ENCODE measurements at regions of chr19 and their contacts with region 1.

Region 1: DNA sequence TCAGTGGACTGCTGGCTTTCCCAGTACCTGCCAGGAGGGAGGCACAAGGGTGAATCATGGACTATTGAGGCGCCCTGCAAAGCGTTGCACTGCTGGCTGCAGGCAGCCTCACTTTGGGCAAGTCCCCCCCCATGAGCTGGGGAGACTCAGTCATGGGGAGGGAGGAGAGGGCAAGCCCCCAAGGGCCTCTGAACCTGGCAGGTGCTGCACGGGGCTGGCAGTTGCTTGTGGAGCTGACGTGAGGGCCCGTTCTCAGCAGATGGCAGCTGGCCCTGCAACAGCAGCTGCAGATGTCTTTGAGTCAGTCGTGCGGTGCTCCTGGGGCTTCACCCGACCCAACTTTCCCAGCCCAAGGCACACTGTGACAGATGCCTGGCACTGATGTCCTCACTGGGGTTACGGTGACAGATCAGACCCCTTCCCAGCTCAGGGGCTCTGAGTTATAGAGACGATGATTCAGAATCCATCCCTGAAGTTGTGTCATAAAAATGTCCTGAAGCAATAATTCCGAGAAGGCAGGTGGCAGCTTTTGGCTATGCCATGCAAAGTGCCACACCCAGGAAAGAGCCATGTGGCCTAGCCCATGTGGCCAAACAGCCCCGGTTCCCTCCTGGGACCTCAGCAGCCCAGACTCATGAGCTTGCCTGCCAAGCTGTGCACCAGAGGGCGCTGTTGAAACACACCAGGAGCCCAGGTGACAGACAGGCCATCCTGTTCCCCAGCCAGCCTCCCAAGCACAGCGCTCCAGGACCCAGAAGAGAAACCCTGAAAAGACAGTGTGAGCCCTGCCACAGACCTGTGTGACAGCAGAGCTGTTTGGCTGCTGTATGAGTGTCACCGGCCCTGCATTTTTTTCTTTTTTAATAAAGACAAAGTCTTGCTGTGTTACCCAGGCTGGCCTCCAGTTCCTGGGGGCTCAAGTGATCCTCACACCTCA is 53.6 kb upstream of the LDLR start:
- DNase-seq: peak; percentile 82
- ATAC-seq: peak; percentile 85
- H3K4me3 Mint-ChIP-seq: peak overlapping the region; percentile 33
- H3K27ac Mint-ChIP-seq: peak overlapping the region; percentile 81
- H3K4me1 Mint-ChIP-seq: peaks cover 22% of the 10 kb centered on the region
- H3K27me3 Mint-ChIP-seq: no peaks in the 10 kb centered on the region
- CTCF ChIP-seq: no peak

Region 2: GRCh38 chr19:10784257-10784656 is 251.5 kb before region 1 on chr19:
- CTCF ChIA-PET with region 1: no interaction called
- POLR2A ChIA-PET with region 1: no interaction called
- intact Hi-C with region 1: no loop called
- DNase-seq: no peak
- ATAC-seq: peak; percentile 40
- H3K4me3 Mint-ChIP-seq: no peak overlapping the region
- H3K27ac Mint-ChIP-seq: peak overlapping the region; percentile 80
- H3K4me1 Mint-ChIP-seq: peaks cover 35% of the 10 kb centered on the region
- H3K27me3 Mint-ChIP-seq: no peaks in the 10 kb centered on the region
- CTCF ChIP-seq: no peak

Region 3: DNA sequence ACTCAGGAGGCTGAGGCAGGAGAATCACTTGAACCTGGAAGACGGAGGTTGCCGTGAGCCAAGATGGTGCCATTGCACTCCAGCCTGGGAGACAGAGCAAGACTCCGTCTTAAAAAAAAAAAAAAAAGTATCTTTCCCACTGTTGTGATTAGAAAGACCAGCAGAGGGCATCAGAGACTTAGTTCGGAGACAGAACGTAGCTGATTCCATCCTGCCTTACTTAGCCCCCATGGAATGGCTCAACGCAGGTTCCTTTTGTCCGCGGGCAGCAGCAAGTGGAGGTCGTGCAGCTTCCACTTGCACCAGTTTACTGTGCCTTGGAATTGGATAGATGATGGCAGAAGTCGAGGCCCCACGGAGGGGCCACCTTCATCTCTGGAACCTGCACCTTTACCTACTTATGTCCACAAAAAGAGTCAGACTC is 99.0 kb before region 1 on chr19:
- CTCF ChIA-PET with region 1: interaction called, 12 read pairs
- POLR2A ChIA-PET with region 1: no interaction called
- intact Hi-C with region 1: no loop called
- DNase-seq: no peak
- ATAC-seq: peak; percentile 80
- H3K4me3 Mint-ChIP-seq: no peak overlapping the region
- H3K27ac Mint-ChIP-seq: no peak overlapping the region
- H3K4me1 Mint-ChIP-seq: peaks cover 3% of the 10 kb centered on the region
- H3K27me3 Mint-ChIP-seq: no peaks in the 10 kb centered on the region
- CTCF ChIP-seq: no peak

Region 4: GRCh38 chr19:11050323-11051114 is 14.8 kb after region 1 on chr19:
- CTCF ChIA-PET with region 1: interaction called, 9 read pairs
- POLR2A ChIA-PET with region 1: interaction called, 5 read pairs
- intact Hi-C with region 1: loop called (anchors 1 kb)
- DNase-seq: no peak
- ATAC-seq: no peak
- H3K4me3 Mint-ChIP-seq: no peak overlapping the region
- H3K27ac Mint-ChIP-seq: no peak overlapping the region
- H3K4me1 Mint-ChIP-seq: peaks cover 83% of the 10 kb centered on the region
- H3K27me3 Mint-ChIP-seq: peaks cover 8% of the 10 kb centered on the region
- CTCF ChIP-seq: no peak

Region 5: DNA sequence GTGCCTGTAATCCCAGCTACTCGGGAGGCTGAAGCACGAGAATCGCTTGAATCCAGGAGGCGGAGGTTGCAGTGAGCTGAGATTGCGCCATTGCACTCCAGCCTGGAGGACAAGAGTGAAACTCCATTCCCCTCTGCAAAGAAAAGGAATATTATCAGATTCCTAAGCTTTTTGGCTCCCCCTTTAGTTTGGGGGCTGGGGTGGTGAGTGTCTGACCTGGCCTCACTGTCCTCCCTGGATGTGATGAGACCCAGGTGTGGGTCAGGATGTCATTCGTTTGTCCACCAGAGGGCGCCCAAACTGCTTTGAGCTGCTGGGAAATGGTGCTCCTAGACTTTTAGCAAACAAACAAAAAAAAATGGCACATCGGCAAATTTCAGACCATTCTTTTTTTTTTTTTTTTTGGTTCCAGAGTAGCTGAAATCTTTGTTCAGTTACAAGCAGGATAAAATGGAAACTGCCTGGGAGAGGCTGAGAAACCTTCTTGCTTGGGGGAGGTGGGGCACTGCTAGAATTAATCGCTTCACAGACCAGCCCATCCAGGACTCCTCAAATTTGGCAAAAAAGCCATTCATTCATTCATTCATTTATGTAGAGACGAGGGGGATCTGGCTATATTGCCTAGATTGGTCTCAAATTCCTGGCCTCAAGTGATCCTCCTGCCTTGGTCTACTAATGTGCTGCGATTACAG is 90.4 kb after region 1 on chr19:
- CTCF ChIA-PET with region 1: interaction called, 73 read pairs
- POLR2A ChIA-PET with region 1: interaction called, 8 read pairs
- intact Hi-C with region 1: loop called (anchors 1 kb)
- DNase-seq: peak; percentile 54
- ATAC-seq: peak; percentile 63
- H3K4me3 Mint-ChIP-seq: no peak overlapping the region
- H3K27ac Mint-ChIP-seq: no peak overlapping the region
- H3K4me1 Mint-ChIP-seq: peaks cover 7% of the 10 kb centered on the region
- H3K27me3 Mint-ChIP-seq: no peaks in the 10 kb centered on the region
- CTCF ChIP-seq: peak; percentile 56

Region 6: DNA sequence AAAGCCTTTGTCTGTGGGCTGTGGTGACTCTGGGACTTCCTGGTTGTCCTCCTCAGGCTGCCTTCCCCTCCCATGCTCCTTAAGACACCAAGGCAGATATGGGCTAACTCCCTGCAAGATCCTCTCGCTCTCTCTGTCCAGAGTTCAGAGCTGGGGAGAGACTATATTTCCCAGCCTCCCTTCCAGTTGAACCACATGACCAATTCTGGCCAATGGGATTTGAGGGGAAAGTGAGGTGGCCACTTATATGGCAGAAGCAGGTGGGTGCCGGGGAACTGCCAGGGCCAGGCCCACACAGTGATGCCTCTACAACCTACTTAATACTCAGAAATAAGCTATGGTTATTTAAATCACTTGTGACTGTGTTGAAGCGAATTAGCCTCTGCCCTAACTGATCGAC is 187.5 kb after region 1 on chr19:
- CTCF ChIA-PET with region 1: no interaction called
- POLR2A ChIA-PET with region 1: no interaction called
- intact Hi-C with region 1: no loop called
- DNase-seq: no peak
- ATAC-seq: no peak
- H3K4me3 Mint-ChIP-seq: no peak overlapping the region
- H3K27ac Mint-ChIP-seq: no peak overlapping the region
- H3K4me1 Mint-ChIP-seq: no peaks in the 10 kb centered on the region
- H3K27me3 Mint-ChIP-seq: no peaks in the 10 kb centered on the region
- CTCF ChIP-seq: no peak

Region 7: GRCh38 chr19:11482384-11483050 is 446.8 kb after region 1 on chr19:
- CTCF ChIA-PET with region 1: interaction called, 6 read pairs
- POLR2A ChIA-PET with region 1: no interaction called
- intact Hi-C with region 1: loop called (anchors 5 kb)
- DNase-seq: peak; percentile 85
- ATAC-seq: peak; percentile 72
- H3K4me3 Mint-ChIP-seq: peak overlapping the region; percentile 74
- H3K27ac Mint-ChIP-seq: peak overlapping the region; percentile 41
- H3K4me1 Mint-ChIP-seq: peaks cover 30% of the 10 kb centered on the region
- H3K27me3 Mint-ChIP-seq: peaks cover 23% of the 10 kb centered on the region
- CTCF ChIP-seq: no peak